ENCODE measurements at regions of chr16 and their contacts with region 1.

Region 1: GRCh38 chr16:49592546-49593423 is 219.2 kb downstream of the C16orf78 start:
- DNase-seq: peak; percentile 28
- ATAC-seq: peak; percentile 90
- H3K4me3 ChIP-seq: no peak overlapping the region
- H3K27ac ChIP-seq: no peak overlapping the region
- H3K4me1 ChIP-seq: no peaks in the 10 kb centered on the region
- H3K27me3 ChIP-seq: peaks cover 0 to 2% of the 10 kb centered on the region in 2 experiments; a peak in 2 of 5 replicates
- CTCF ChIP-seq: peak; percentile 81
- EP300 ChIP-seq: no peak
- POLR2A ChIP-seq: no peak
- RAD21 ChIP-seq: 0 out of 2 replicates have a peak, but pooled peaks have one; percentile 47

Region 2: GRCh38 chr16:49407873-49408550 is 184.8 kb before region 1 on chr16:
- CTCF ChIA-PET with region 1: interaction called, 22 read pairs
- POLR2A ChIA-PET with region 1: no interaction called
- in situ Hi-C with region 1: loop called (anchors 5 kb)
- intact Hi-C with region 1: no loop called
- DNase-seq: peak; percentile 76
- ATAC-seq: peak; percentile 99
- H3K4me3 ChIP-seq: no peak overlapping the region
- H3K27ac ChIP-seq: no peak overlapping the region
- H3K4me1 ChIP-seq: no peaks in the 10 kb centered on the region
- H3K27me3 ChIP-seq: no peaks in the 10 kb centered on the region
- CTCF ChIP-seq: peak; percentile 98
- EP300 ChIP-seq: no peak
- POLR2A ChIP-seq: no peak
- RAD21 ChIP-seq: peak; percentile 93

Region 3: GRCh38 chr16:49491771-49492761 is 100.7 kb before region 1 on chr16:
- CTCF ChIA-PET with region 1: interaction called, 4 read pairs
- POLR2A ChIA-PET with region 1: no interaction called
- in situ Hi-C with region 1: no loop called
- intact Hi-C with region 1: loop called (anchors 1 kb)
- DNase-seq: no peak
- ATAC-seq: peak; percentile 92
- H3K4me3 ChIP-seq: no peak overlapping the region
- H3K27ac ChIP-seq: no peak overlapping the region
- H3K4me1 ChIP-seq: no peaks in the 10 kb centered on the region
- H3K27me3 ChIP-seq: peaks cover 0 to 11% of the 10 kb centered on the region in 2 experiments; a peak in 2 of 5 replicates
- CTCF ChIP-seq: peak; percentile 83
- EP300 ChIP-seq: no peak
- POLR2A ChIP-seq: no peak
- RAD21 ChIP-seq: peak; percentile 62